ENCODE measurements at regions of chr2 and their contacts with region 1.

Region 1: GRCh38 chr2:182980115-182980514 is 58.1 kb downstream of the NCKAP1 start:
- DNase-seq: no peak
- ATAC-seq: peak; percentile 47
- H3K4me3 ChIP-seq: no peak overlapping the region
- H3K27ac ChIP-seq: no peak overlapping the region
- H3K4me1 ChIP-seq: no peaks in the 10 kb centered on the region
- H3K27me3 ChIP-seq: no peaks in the 10 kb centered on the region
- CTCF ChIP-seq: peak; percentile 23 to 63 (median 54)
- POLR2A ChIP-seq: no peak

Region 2: DNA sequence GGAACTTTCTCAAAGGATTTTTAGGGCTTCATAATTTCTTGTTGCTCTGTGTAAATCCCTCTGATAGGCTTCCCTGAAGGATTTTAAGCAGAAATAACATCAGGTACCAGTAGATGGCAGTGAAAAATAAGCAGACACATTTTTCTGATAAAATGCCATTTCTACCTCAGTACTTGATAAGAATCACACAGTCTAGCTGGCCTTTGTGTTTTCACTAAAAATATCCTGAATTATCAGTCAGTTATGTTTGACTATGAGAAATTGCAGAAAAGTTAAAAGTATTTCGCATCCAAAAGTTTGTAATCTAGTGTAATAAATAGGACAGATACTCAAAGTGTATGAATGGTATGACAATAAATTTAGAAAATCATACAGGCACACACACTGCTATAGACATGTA is 195.3 kb before region 1 on chr2:
- intact Hi-C with region 1: loop called (anchors 10 kb)
- DNase-seq: no peak
- ATAC-seq: no peak
- H3K4me3 ChIP-seq: no peak overlapping the region
- H3K27ac ChIP-seq: no peak overlapping the region
- H3K4me1 ChIP-seq: no peaks in the 10 kb centered on the region
- H3K27me3 ChIP-seq: no peaks in the 10 kb centered on the region
- CTCF ChIP-seq: peak in 6 of 7 experiments; percentile 28 to 59 (median 49)
- POLR2A ChIP-seq: no peak

Region 3: GRCh38 chr2:183179156-183179555 is 199.0 kb after region 1 on chr2:
- intact Hi-C with region 1: no loop called
- DNase-seq: no peak
- ATAC-seq: no peak
- H3K4me3 ChIP-seq: no peak overlapping the region
- H3K27ac ChIP-seq: no peak overlapping the region
- H3K4me1 ChIP-seq: no peaks in the 10 kb centered on the region
- H3K27me3 ChIP-seq: no peaks in the 10 kb centered on the region
- CTCF ChIP-seq: no peak
- POLR2A ChIP-seq: no peak